WTC11 (cell line): ENCODE measurements at regions of chr13 and their contacts with region 1.

Region 1: GRCh38 chr13:52850396-52851136 is 2.1 kb upstream of the PCDH8 start:
- DNase-seq: peak; percentile 94
- ATAC-seq: peak; percentile 53
- H3K4me3 Mint-ChIP-seq: peak overlapping the region; percentile 88
- H3K27ac Mint-ChIP-seq: peak overlapping the region; percentile 98
- H3K4me1 Mint-ChIP-seq: peaks cover 39% of the 10 kb centered on the region
- H3K27me3 Mint-ChIP-seq: peaks cover 59% of the 10 kb centered on the region
- CTCF ChIP-seq: peak; percentile 88

Region 2: GRCh38 chr13:52053460-52053859 is 797.1 kb before region 1 on chr13:
- CTCF ChIA-PET with region 1: no interaction called
- POLR2A ChIA-PET with region 1: no interaction called
- DNase-seq: no peak
- ATAC-seq: no peak
- H3K4me3 Mint-ChIP-seq: no peak overlapping the region
- H3K27ac Mint-ChIP-seq: no peak overlapping the region
- H3K4me1 Mint-ChIP-seq: peaks cover 23% of the 10 kb centered on the region
- H3K27me3 Mint-ChIP-seq: no peaks in the 10 kb centered on the region
- CTCF ChIP-seq: no peak

Region 3: GRCh38 chr13:52665325-52665724 is 185.2 kb before region 1 on chr13:
- CTCF ChIA-PET with region 1: interaction called, 34 read pairs
- POLR2A ChIA-PET with region 1: no interaction called
- DNase-seq: no peak
- ATAC-seq: no peak
- H3K4me3 Mint-ChIP-seq: no peak overlapping the region
- H3K27ac Mint-ChIP-seq: no peak overlapping the region
- H3K4me1 Mint-ChIP-seq: peaks cover 2% of the 10 kb centered on the region; the same call in 1 of the 2 replicates
- H3K27me3 Mint-ChIP-seq: no peaks in the 10 kb centered on the region
- CTCF ChIP-seq: no peak

Region 4: DNA sequence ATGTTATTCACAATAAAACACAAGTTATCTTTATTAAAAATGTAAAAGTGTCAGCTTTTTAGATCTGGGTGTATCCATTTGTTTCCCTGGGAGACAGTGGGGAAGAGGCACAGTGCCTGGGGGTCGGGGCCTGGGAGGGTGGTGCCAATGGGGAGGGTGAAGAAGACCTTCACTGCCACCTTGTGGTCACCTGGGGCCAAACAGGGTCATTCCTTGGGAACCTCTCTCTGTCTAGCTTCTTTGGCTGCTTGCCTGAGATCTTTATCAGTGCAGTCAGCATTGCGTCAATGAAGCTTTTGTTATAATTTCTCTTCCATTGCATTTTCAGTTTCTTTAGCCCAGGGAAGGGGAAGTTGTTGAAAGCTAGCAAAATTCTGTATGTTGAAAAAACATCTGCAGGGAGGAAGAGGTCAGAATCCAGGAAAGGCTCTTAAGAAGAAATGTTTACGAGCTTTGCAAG is 41.2 kb before region 1 on chr13:
- CTCF ChIA-PET with region 1: interaction called, 43 read pairs
- POLR2A ChIA-PET with region 1: interaction called, 5 read pairs
- DNase-seq: peak; percentile 83
- ATAC-seq: peak; percentile 96
- H3K4me3 Mint-ChIP-seq: no peak overlapping the region
- H3K27ac Mint-ChIP-seq: no peak overlapping the region
- H3K4me1 Mint-ChIP-seq: peaks cover 16% of the 10 kb centered on the region
- H3K27me3 Mint-ChIP-seq: no peaks in the 10 kb centered on the region
- CTCF ChIP-seq: peak; percentile 80

Region 5: GRCh38 chr13:52879950-52880741 is 29.6 kb after region 1 on chr13:
- CTCF ChIA-PET with region 1: interaction called, 20 read pairs
- POLR2A ChIA-PET with region 1: interaction called, 4 read pairs
- DNase-seq: peak; percentile 26
- ATAC-seq: peak; percentile 85
- H3K4me3 Mint-ChIP-seq: peak overlapping the region; percentile 47
- H3K27ac Mint-ChIP-seq: peak overlapping the region; percentile 19; the same call in 1 of the 2 replicates
- H3K4me1 Mint-ChIP-seq: peaks cover 62% of the 10 kb centered on the region
- H3K27me3 Mint-ChIP-seq: peaks cover 98% of the 10 kb centered on the region
- CTCF ChIP-seq: no peak

Region 6: DNA sequence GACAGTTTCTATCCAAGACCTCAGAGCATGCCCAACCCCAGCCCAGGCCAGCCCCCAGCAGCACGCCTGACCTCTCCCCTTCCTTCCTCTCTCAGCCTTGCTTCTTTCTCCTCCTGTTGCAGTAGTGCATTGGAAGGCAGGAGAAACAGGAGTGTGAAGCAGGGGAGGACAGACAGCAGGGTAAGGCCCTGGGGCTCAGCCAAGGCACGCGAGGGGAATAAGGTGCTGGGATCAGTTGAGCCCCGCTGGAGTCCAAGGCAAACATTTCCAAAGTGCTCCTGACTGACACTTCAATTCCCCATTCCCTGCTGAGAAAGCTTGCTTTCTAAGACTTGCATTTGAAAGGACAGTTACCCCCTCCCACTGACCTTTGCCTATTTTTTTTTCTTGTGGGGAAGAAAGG is 104.9 kb after region 1 on chr13:
- CTCF ChIA-PET with region 1: interaction called, 53 read pairs
- POLR2A ChIA-PET with region 1: interaction called, 5 read pairs
- DNase-seq: peak; percentile 53
- ATAC-seq: peak; percentile 88
- H3K4me3 Mint-ChIP-seq: peak overlapping the region; percentile 47
- H3K27ac Mint-ChIP-seq: peak overlapping the region; percentile 84
- H3K4me1 Mint-ChIP-seq: peaks cover 68% of the 10 kb centered on the region
- H3K27me3 Mint-ChIP-seq: peaks cover 41% of the 10 kb centered on the region
- CTCF ChIP-seq: no peak

Region 7: GRCh38 chr13:53068585-53069520 is 218.3 kb after region 1 on chr13:
- CTCF ChIA-PET with region 1: interaction called, 10 read pairs
- POLR2A ChIA-PET with region 1: no interaction called
- DNase-seq: no peak
- ATAC-seq: peak; percentile 56
- H3K4me3 Mint-ChIP-seq: no peak overlapping the region
- H3K27ac Mint-ChIP-seq: no peak overlapping the region
- H3K4me1 Mint-ChIP-seq: peaks cover 13% of the 10 kb centered on the region
- H3K27me3 Mint-ChIP-seq: no peaks in the 10 kb centered on the region
- CTCF ChIP-seq: no peak

Region 8: DNA sequence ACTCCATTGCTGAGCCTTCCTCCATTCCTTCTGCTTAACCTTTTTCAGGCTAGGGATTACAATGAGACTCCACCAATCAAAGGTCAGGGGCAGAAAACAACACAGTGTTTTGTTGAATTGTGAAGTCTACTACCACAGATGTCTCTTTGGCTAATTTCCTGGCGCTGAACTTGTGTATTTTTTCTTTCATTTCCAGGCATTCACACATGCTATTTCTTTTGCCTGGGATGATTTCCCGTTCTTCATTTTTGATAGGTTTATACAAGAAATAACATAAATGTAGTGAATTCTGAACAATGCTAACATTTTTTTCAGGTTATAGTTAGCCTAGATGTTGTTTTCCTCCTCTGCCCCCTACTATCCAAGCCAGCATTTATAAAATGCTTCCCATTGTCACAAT is 242.4 kb after region 1 on chr13:
- CTCF ChIA-PET with region 1: no interaction called
- POLR2A ChIA-PET with region 1: no interaction called
- DNase-seq: no peak
- ATAC-seq: no peak
- H3K4me3 Mint-ChIP-seq: no peak overlapping the region
- H3K27ac Mint-ChIP-seq: no peak overlapping the region
- H3K4me1 Mint-ChIP-seq: peaks cover 4% of the 10 kb centered on the region; the same call in 1 of the 2 replicates
- H3K27me3 Mint-ChIP-seq: 0 out of 2 replicates have a peak, but pooled peaks cover 2% of the 10 kb centered on the region
- CTCF ChIP-seq: no peak

Region 9: DNA sequence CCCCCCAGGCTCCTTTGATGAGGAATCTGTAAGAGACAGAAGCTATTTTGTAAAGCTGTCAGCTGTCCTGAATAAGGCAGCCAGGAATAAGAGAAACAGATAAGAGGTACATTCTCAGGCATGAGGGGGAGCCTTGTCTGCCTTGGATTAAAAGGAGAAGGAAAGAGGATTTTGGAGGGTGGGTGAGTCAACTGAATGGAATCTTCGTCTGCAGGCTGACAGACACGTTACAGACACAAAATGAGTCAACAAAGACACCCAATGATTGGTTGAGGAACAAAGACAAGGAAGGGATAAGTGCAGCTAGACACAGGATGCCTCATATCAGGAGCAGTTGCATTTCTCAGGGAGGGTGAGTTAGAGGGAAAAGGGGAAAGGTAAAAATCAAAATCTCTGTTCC is 340.5 kb after region 1 on chr13:
- CTCF ChIA-PET with region 1: no interaction called
- POLR2A ChIA-PET with region 1: no interaction called
- DNase-seq: no peak
- ATAC-seq: peak; percentile 73
- H3K4me3 Mint-ChIP-seq: no peak overlapping the region
- H3K27ac Mint-ChIP-seq: no peak overlapping the region
- H3K4me1 Mint-ChIP-seq: peaks cover 8% of the 10 kb centered on the region
- H3K27me3 Mint-ChIP-seq: no peaks in the 10 kb centered on the region; the same call in none of the 2 replicates
- CTCF ChIP-seq: no peak